Activated CD4-positive, alpha-beta T cell treated with anti-CD3 and anti-CD28 coated beads for 36 hours (primary cell): ENCODE measurements at regions of chr13 and their contacts with region 1.

Region 1: DNA sequence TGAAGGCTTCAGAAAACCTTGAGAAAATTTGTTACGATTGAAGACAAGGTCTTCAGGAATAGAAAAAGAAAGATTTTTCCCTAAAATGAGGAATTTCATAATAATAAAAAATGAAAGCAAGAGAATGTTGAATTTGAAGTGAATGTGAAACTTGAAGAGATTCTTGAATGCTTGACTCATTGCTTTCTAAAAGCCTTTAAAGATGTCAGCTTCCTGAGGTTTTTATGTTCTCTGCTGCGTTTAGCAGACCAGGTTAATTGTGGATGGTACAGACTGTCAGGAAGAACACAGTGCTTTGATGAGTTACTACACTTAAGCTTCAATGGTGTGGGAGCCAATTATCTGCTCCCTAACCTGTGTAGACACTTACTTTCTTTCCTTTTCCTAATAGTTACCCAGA is 96.3 kb upstream of the FNDC3A start:
- DNase-seq: no peak
- ATAC-seq: no peak
- H3K4me3 Mint-ChIP-seq: no peak overlapping the region
- H3K27ac Mint-ChIP-seq: no peak overlapping the region
- H3K4me1 Mint-ChIP-seq: peaks cover 46% of the 10 kb centered on the region
- H3K27me3 Mint-ChIP-seq: peaks cover 6% of the 10 kb centered on the region

Region 2: DNA sequence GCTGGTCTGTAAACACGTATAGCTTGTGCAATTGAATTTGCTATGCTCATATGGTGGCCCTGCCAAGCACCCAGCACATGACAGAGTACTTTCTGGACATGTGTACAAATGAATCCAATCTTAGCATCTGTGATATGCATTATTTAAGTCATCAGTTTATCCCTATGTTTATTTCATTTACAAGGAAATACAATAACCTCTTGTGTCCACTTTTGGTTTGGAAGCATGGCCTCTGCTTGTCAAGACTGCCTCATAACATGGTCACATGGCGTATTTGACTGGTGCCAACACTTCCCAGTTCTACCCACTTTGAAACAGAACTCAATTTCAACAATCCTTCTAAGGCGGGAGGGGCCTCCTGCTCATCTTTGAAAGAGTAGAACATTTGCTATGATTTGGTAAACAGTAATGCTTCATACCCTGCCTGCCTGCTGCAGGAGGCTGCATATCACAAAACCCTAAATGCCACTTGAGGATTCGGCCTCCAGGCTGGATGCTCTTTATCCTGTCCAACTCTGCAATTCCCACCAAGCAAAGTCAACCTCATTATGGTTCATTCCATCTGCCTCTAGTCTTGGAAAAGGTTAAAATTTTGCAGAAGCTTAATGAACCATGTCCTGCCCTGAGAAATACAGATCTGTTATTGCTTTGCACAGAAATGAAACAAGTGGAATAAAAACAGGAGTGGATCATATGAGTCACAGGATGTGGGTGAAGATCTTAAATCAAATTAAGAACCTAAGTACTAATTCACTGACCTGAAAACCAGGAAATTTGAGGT is 74.4 kb before region 1 on chr13:
- CTCF ChIA-PET with region 1: no interaction called
- POLR2A ChIA-PET with region 1: interaction called, 3 read pairs
- intact Hi-C with region 1: loop called (anchors 1 kb)
- DNase-seq: peak; percentile 17
- ATAC-seq: peak; percentile 82
- H3K4me3 Mint-ChIP-seq: no peak overlapping the region
- H3K27ac Mint-ChIP-seq: peak overlapping the region; percentile 47
- H3K4me1 Mint-ChIP-seq: peaks cover 31% of the 10 kb centered on the region
- H3K27me3 Mint-ChIP-seq: peaks cover 5% of the 10 kb centered on the region

Region 3: DNA sequence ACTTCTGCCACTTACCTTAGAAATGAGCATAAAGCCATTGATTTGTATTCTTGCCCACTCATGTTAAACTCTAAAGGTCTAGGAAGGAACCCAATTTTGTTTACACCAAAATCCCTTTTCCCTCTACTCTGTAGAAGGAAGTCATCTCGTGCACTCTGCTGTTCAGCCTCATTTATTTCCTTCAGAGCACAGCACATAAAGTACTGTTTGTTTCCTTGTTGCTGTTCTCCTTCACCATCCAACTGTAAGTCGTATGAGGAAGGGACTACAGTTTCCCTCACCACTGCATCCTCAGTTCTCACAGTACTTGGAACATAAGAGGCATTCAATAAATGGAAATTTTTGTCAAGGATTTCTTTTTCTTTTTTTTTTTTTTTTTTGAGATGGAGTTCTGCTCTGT is 392.9 kb after region 1 on chr13:
- CTCF ChIA-PET with region 1: no interaction called
- POLR2A ChIA-PET with region 1: no interaction called
- intact Hi-C with region 1: no loop called
- DNase-seq: no peak
- ATAC-seq: no peak
- H3K4me3 Mint-ChIP-seq: no peak overlapping the region
- H3K27ac Mint-ChIP-seq: no peak overlapping the region
- H3K4me1 Mint-ChIP-seq: peaks cover 12% of the 10 kb centered on the region
- H3K27me3 Mint-ChIP-seq: no peaks in the 10 kb centered on the region